ENCODE measurements at regions of chr9 and their contacts with region 1.

Region 1: GRCh38 chr9:17531642-17532254 is 47.1 kb upstream of the SH3GL2 start:
- DNase-seq: no peak
- ATAC-seq: no peak
- H3K4me3 ChIP-seq: no peak overlapping the region
- H3K27ac ChIP-seq: no peak overlapping the region
- H3K4me1 ChIP-seq: no peaks in the 10 kb centered on the region
- H3K27me3 ChIP-seq: no peaks in the 10 kb centered on the region

Region 2: GRCh38 chr9:17802249-17802857 is 270.6 kb after region 1 on chr9:
- intact Hi-C with region 1: loop called (anchors 2 to 10 kb)
- DNase-seq: no peak
- ATAC-seq: no peak
- H3K4me3 ChIP-seq: no peak overlapping the region
- H3K27ac ChIP-seq: no peak overlapping the region
- H3K4me1 ChIP-seq: no peaks in the 10 kb centered on the region
- H3K27me3 ChIP-seq: no peaks in the 10 kb centered on the region

Region 3: DNA sequence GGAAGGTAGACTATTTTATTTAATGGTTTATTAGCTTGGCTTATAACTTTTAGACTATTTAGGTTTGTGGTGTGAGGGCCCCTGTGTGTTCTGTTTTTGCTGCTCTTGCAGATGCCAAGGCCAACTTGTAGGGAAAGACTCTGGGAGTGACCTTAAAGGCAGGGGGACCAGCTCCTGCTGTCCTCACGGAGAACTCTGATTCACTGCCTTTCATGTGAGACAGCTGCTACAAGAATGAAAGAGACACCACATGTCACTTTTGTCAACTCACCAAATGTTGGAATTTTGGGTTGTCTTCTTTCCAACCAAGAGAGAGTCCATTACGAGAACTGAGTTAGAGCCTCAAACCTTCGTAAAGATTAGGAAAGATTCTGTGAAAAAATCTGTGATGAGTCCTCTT is 683.9 kb after region 1 on chr9:
- intact Hi-C with region 1: loop called (anchors 10 kb)
- DNase-seq: no peak
- ATAC-seq: no peak
- H3K4me3 ChIP-seq: no peak overlapping the region
- H3K27ac ChIP-seq: no peak overlapping the region
- H3K4me1 ChIP-seq: peaks cover 0 to 4% of the 10 kb centered on the region in 2 donors
- H3K27me3 ChIP-seq: no peaks in the 10 kb centered on the region

Region 4: DNA sequence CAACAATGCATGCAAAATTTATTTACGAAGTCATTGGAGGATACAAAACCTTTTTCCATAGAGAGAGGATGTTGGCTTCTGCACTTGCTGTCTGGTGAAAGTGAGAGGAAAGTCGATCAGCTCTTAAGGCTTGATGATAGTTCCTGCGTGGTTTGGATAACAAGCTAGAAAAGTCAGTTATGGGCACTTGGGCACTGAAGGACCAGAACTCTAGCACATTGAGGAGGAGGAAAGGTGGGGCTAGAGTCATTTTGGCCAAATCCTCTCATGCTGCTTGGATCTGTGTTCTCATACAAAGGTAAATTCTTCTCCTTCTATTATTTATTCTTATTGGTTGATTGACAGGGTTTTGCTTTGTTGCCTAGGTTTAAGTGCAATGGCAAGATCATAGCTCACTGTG is 696.4 kb after region 1 on chr9:
- intact Hi-C with region 1: no loop called
- DNase-seq: no peak
- ATAC-seq: no peak
- H3K4me3 ChIP-seq: no peak overlapping the region
- H3K27ac ChIP-seq: no peak overlapping the region
- H3K4me1 ChIP-seq: no peaks in the 10 kb centered on the region
- H3K27me3 ChIP-seq: no peaks in the 10 kb centered on the region

Measured in aorta (tissue), 5 donors.